GM23248 (cell line): ENCODE measurements at regions of chr2 and their contacts with region 1.

Region 1: DNA sequence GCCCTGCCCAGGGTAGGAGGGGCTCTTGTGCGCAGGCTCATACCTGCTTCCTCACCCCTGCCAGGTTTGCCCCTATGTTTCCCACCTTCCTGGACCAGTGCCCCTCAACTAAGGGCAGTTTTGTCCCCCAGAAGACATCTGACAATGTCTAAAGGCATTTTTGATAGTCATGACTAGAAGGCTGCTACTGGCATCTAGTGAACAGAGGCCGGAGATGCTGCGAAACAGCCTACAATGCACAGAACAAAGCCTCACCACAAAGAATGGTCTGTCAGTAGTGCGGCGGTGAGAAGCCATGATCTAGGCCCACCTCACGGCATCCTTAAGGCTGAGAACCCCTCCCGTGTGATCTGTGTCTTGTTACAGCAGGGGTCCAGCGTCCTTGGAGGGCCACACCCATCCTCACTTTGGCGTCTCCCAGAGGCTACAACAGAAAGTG is 96.0 kb downstream of the TMEM17 start:
- DNase-seq: no peak
- H3K4me3 ChIP-seq: no peak overlapping the region
- H3K27ac ChIP-seq: no peak overlapping the region
- H3K4me1 ChIP-seq: peaks cover 11% of the 10 kb centered on the region
- H3K27me3 ChIP-seq: no peaks in the 10 kb centered on the region

Region 2: GRCh38 chr2:61910603-61911002 is 499.4 kb before region 1 on chr2:
- in situ Hi-C with region 1: loop called (anchors 5 kb)
- DNase-seq: peak; percentile 40
- H3K4me3 ChIP-seq: no peak overlapping the region
- H3K27ac ChIP-seq: no peak overlapping the region
- H3K4me1 ChIP-seq: peaks cover 7% of the 10 kb centered on the region
- H3K27me3 ChIP-seq: no peaks in the 10 kb centered on the region

Region 3: DNA sequence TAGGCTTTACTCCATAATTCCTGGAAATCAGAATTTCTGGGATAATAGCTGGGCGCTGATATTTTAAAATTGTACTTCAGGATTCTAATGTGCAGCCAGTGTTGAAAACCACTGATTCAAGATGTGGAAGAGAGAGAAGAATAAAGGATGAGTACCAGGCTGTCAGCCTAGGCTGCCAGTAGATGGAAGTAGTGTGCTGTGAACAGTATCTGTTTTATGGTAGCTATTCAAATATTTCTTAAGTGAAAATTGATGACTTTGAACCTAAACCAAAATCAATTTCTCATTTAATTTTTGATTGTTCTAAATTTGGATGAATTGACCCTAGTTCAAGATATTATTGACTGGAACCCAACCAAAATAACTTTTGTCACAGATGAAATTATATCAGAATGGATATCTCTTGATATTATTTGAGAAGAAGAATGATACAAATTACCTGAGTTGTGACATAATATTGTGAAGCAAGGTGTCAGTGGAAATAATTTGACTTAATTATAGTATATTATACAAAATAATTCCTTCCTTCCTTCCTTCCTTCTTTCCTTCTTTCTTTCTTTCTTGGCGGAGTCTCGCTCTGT is 416.5 kb before region 1 on chr2:
- in situ Hi-C with region 1: loop called (anchors 5 kb)
- DNase-seq: peak; percentile 65
- H3K4me3 ChIP-seq: no peak overlapping the region
- H3K27ac ChIP-seq: no peak overlapping the region
- H3K4me1 ChIP-seq: no peaks in the 10 kb centered on the region
- H3K27me3 ChIP-seq: no peaks in the 10 kb centered on the region